Left colon (tissue), 2 donors: ENCODE measurements at regions of chr6 and their contacts with region 1.

Region 1: GRCh38 chr6:116279260-116280063 is at the start of gene TSPYL1:
- DNase-seq: peak; percentile 97
- ATAC-seq: peak; percentile 96
- total RNA-seq, gene TSPYL1: 70.1 to 80.1 TPM

Region 2: DNA sequence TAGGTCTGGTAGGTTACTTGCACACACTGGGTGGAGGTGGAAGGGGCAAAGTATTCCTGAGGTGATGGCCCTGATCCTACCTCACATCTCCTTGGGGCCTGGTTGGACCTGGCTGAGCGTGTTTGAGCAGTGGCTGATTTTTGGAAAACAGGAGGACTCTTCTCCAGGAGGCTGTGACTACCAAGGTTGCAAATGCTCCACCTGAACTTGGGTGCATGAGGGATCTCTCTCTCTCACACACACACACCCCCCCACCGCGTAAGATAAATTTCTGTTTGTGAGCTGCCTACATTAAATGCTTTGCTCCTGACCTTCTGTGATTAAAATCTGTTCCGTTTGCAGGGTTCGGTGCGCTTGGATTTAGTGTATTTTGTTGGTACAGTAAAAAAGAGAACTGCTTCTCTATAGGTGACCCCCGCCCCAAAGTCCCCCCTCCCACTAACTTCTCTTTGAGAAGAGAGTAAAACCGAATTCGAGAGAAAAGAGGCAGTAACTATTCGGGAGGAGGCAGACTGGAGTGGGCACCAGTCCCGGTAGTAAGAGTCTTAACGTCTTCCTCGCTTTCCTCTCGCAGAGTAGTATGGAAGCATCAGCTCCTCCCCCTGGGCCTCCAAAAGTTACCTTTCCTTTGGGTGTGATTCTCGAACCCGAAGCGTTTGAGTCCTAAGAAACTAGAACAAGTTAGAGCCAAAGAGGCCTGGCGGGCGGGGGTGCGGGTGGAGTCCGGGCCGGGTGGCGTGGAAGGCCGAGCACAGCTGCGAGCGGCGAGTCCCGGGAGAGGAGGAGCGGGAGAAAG is 90.7 kb after region 1 on chr6:
- intact Hi-C with region 1: loop called in 1 of 2 experiments (anchors 10 kb)
- DNase-seq: peak in 1 of 2 donors; percentile 9
- ATAC-seq: peak; percentile 58

Region 3: DNA sequence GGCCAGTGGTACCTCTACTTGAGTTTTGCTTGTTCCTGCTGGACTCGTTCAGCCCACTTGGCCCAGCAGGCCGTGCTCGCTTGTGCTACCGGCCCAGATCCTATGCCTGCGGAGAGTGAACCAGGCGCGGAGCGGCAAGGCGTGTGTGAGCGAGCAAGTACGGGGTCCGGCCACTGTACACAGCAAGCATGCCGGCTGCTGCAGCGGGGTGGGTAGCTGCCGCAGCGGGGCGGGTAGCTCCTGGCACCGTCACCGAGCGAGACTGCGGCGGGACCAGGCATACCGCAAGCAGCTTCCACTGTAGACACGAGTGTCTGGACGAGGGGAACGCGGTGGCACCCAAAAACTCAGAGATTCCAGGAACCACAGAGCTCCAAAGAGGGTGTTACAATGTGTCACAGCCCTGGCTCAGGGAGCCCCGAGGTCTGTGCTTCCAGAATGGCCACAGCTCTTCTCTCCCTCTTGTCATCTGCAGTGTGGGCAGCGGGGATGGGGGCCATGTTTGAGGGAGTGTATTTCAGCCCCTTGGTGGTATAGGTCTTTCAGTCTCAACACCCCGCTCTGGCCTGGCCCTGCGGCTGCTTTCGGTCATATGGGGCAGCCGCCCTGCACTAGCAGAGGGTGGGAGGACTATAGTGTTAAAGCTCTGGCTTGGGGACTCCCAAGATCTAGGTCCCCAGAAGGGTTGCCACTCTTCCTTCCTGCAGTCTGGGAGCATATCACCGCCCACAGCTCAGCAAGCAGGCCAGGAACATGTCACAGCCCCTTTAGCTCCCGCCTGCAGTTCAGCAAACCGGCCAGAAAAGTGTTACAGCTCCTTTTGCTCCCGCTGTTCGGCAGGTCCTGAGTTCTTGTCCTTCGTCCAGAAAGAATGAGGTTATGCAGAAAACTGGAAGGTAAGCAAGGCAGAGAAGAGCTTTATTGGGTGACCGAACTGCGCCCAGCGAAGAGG is 285.7 kb after region 1 on chr6:
- intact Hi-C with region 1: loop called in 1 of 2 experiments (anchors 5 kb)
- DNase-seq: peak in 1 of 2 donors; percentile 17
- ATAC-seq: peak; percentile 46